ENCODE measurements at regions of chr7 and their contacts with region 1.

Region 1: GRCh38 chr7:73718905-73719805 is at the start of gene STX1A:
- DNase-seq: peak; percentile 71
- H3K4me3 Mint-ChIP-seq: peak within 1 kb of the TSS; percentile 89
- H3K27ac Mint-ChIP-seq: peak within 1 kb of the TSS; percentile 62
- H3K4me1 Mint-ChIP-seq: peaks cover 31% of the 10 kb centered on the region
- H3K27me3 Mint-ChIP-seq: peaks cover 9% of the 10 kb centered on the region
- total RNA-seq, gene STX1A: 17.2 and 17.6 TPM in 2 replicates

Region 2: DNA sequence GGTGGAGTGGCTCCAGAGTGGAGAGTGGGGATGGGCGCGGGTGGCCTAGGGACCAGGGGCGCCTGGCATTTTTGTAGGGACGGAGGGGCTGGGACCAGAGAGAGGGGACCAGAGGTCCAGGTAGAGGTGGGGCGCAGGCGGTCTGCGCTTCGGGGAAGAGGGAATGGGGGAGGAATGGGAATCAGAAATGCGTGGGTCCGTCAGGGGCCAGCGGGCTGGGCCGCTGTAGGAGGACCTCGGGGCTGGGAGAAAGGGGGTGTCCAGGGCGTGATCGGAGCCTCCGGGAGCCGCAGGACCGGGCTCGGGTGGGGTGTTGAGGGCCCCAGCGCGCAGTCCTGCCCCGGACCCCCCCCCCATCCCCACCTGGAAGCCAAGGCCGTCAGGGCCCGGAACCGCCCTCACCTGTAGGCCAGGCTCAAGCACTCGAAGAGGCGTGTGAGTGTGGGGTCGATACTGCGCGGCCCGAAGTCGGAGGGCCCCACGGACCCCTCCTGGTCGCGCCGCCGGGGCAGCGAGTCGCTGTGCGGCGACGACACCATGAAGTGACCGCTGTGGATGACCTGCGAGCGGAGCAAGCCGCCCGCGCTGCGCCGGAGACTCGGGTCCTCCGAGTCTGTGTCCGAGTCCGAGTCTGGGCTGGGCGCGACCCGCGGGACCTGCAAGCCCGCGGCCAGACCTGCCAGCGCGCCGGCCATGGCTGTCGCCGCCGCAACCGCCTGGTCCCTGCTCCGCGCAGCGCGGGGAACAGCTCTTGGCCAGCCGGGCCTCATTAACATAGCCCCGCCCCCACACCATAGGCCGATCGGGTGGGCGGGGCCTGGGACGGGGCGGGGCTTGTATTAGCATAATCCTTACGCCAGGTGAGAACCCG is 95.1 kb before region 1 on chr7 and contains the start of gene MLXIPL:
- intact Hi-C with region 1: loop called (anchors 2 kb)
- DNase-seq: peak; percentile 34
- H3K4me3 Mint-ChIP-seq: no peak within 1 kb of the TSS
- H3K27ac Mint-ChIP-seq: no peak within 1 kb of the TSS
- H3K4me1 Mint-ChIP-seq: no peaks in the 10 kb centered on the region
- H3K27me3 Mint-ChIP-seq: peaks cover 54% of the 10 kb centered on the region
- total RNA-seq, gene MLXIPL: not detected in 2 replicates

Region 3: GRCh38 chr7:73683056-73683964 is 35.8 kb before region 1 on chr7 and contains the starts of genes BUD23 and DNAJC30:
- intact Hi-C with region 1: loop called (anchors 1 kb)
- DNase-seq: peak; percentile 88
- H3K4me3 Mint-ChIP-seq: peak within 1 kb of the TSS; percentile 97
- H3K27ac Mint-ChIP-seq: peak within 1 kb of the TSS; percentile 97
- H3K4me1 Mint-ChIP-seq: peaks cover 21% of the 10 kb centered on the region
- H3K27me3 Mint-ChIP-seq: no peaks in the 10 kb centered on the region
- total RNA-seq, gene BUD23: 96.0 and 109 TPM in 2 replicates
- total RNA-seq, gene DNAJC30: 9.2 TPM in 2 replicates

Region 4: DNA sequence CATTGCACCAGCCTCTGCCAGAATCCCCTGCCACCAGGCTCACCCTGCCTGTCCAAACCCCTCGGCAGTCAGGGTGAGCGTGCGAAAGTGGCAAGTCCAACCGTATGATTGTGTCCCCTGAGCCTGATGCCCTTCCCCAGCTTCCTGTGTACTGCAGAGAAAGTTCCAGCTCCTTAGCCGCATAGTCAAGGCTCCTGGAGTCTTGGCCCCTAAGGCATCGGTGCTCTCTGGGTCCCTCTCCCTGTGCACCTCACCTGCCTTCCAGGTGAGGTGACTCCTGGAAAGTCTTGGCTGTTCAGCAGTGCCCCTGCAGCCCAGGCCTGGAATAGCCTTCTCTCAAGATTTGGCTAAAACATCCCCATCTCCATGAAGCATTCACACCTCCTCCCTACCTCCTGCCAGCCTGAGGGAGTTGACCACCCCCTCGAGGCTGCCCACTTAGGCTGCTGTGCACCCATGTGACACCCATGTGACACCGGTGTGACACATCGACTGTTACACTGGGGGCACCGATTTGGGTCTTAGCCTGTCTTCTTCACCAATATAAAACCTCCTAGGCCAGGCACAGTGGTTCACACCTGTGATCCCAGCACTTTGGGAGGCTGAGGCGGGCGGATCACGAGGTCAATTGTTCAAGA is 252.7 kb after region 1 on chr7:
- intact Hi-C with region 1: no loop called
- DNase-seq: no peak
- H3K4me3 Mint-ChIP-seq: no peak overlapping the region
- H3K27ac Mint-ChIP-seq: no peak overlapping the region
- H3K4me1 Mint-ChIP-seq: peaks cover 3% of the 10 kb centered on the region
- H3K27me3 Mint-ChIP-seq: no peaks in the 10 kb centered on the region